GM10248 (cell line): ENCODE measurements at regions of chr15 and their contacts with region 1.

Region 1: DNA sequence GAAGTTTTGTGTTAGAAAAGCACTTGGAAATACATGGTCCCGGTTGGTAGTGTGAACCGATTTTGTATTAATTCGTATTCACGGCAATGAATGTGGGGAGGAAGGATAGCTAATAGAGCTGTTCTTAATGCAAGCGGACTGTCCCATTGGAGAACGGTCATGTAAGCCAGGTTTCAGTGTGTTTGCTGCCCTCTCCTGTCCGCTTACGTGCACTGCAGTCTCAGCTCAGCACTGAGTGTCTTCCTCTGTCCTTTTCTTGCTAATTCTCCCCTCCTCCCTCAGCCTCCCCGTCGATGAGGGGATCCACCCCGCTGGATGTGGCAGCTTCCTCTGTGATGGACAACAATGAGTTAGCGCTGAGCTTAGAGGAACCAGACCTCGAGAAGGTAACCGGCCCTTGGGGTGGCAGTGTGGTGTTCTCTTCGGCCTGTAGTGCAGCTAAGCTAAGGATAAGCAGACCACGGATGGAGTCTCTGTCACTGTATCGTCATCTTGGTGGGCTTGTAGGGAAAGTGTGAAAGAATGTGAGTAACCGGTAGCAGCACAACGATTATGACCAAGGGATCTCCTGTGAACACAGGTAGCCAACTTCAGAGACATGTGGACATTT is 267.5 kb upstream of the CHRM5 start:
- DNase-seq: peak; percentile 56
- CTCF ChIP-seq: peak; percentile 95

Region 2: DNA sequence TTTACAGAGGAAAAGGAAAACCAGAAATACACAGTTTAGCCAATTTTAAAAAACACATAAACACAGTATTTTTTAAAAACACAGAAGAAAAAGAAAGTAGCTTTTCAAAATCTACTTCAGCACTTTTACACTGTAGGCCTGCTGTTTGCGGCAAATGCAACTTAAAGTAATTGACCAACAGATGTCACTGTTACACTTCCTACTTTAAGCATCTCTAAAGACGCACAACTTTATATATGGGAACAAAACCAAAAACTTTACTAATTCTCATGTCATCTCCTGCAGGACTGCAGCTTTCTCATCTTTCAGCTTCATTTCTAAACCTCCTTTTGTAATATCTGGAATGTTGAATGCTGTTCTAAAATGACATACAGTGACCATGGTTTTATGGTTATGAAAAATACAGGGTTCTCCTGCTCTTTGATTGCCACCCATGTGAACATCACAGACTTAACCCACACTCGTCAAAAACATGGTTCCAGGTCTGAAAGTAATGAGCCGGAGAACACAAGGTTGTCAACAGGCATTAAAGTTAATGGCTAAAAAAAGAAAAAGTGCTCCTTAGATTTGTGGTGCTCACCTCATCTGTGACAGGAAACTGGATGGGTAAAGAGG is 614.2 kb before region 1 on chr15:
- CTCF ChIA-PET with region 1: interaction called, 13 read pairs
- POLR2A ChIA-PET with region 1: no interaction called
- DNase-seq: peak; percentile 27
- CTCF ChIP-seq: peak; percentile 48

Region 3: GRCh38 chr15:33292717-33293307 is 408.0 kb before region 1 on chr15:
- CTCF ChIA-PET with region 1: interaction called, 51 read pairs
- POLR2A ChIA-PET with region 1: no interaction called
- DNase-seq: peak; percentile 53
- CTCF ChIP-seq: peak; percentile 72

Region 4: GRCh38 chr15:33716025-33716424 is 15.2 kb after region 1 on chr15:
- CTCF ChIA-PET with region 1: interaction called, 26 read pairs
- POLR2A ChIA-PET with region 1: no interaction called
- DNase-seq: no peak
- CTCF ChIP-seq: no peak

Region 5: GRCh38 chr15:33722005-33722672 is 21.3 kb after region 1 on chr15:
- CTCF ChIA-PET with region 1: interaction called, 26 read pairs
- POLR2A ChIA-PET with region 1: no interaction called
- DNase-seq: no peak
- CTCF ChIP-seq: no peak